H1 (cell line): ENCODE measurements at regions of chr3 and their contacts with region 1.

Region 1: GRCh38 chr3:185561374-185561943 is 9.1 kb upstream of the LIPH start:
- DNase-seq: no peak
- H3K4me3 ChIP-seq: no peak overlapping the region
- H3K27ac ChIP-seq: 0 out of 2 replicates have a peak overlapping the region, but pooled peaks have one; percentile 4
- H3K4me1 ChIP-seq: peaks cover 6 to 16% (median 9%) of the 10 kb centered on the region in 4 experiments
- H3K27me3 ChIP-seq: no peaks in the 10 kb centered on the region
- CTCF ChIP-seq: no peak
- EP300 ChIP-seq: no peak
- POLR2A ChIP-seq: no peak
- RAD21 ChIP-seq: no peak

Region 2: DNA sequence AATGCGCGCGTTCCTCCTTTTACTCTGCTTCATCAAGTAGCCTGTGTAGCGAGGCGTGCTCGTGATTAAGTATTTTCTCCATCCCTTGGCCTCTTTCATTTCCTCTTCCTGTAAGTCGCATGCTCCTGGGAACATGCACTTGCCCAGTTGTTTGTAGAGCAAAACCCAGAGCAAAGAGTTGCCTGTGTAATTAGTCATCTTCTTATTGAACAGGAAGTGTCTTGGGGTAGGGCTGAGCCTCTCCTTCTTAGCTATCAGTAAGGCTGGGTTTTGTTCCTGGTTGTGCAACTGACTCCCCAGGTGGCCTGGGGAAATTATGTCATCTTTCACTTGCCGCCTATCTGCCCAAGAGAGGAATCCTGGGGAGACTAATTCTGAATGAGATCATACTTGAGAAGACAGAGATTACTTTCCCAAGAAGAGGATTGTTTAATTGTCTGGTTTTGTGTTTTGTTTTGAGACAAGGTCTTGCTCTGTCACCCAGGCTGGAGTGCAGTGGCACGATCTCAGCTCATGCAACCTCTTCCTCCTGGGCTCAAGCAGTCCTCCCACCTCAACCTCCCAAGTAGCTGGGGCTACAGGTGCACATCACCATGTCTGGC is 24.0 kb before region 1 on chr3:
- CTCF ChIA-PET with region 1: interaction called, 32 read pairs
- POLR2A ChIA-PET with region 1: no interaction called
- DNase-seq: no peak
- H3K4me3 ChIP-seq: no peak overlapping the region
- H3K27ac ChIP-seq: no peak overlapping the region
- H3K4me1 ChIP-seq: no peaks in the 10 kb centered on the region
- H3K27me3 ChIP-seq: no peaks in the 10 kb centered on the region
- CTCF ChIP-seq: no peak
- EP300 ChIP-seq: no peak
- POLR2A ChIP-seq: no peak
- RAD21 ChIP-seq: no peak

Region 3: DNA sequence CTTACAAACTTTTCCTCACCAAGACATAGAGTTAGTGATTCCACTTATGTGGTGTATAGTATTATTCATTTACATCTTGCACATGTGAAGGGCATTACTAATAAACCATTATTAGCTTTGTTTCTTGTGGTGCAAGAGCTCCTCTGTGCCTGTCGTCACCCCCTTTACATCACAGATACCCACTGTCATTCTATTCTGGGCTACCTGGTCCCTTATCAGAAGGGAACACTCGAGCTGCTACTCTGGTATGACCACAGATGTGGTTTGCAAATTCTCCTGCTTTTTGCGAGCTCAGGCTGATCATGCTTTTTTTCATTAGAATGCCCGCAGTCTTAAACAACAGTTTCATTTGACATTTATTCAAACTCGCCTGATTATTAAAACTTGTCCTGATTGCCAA is 10.7 kb after region 1 on chr3:
- CTCF ChIA-PET with region 1: interaction called, 69 read pairs
- POLR2A ChIA-PET with region 1: interaction called, 6 read pairs
- DNase-seq: no peak
- H3K4me3 ChIP-seq: no peak overlapping the region
- H3K27ac ChIP-seq: no peak overlapping the region
- H3K4me1 ChIP-seq: peaks cover 0 to 3% (median under 1%) of the 10 kb centered on the region in 4 experiments; a peak in 1 of 7 replicates
- H3K27me3 ChIP-seq: no peaks in the 10 kb centered on the region
- CTCF ChIP-seq: no peak
- EP300 ChIP-seq: no peak
- POLR2A ChIP-seq: no peak
- RAD21 ChIP-seq: no peak

Region 4: DNA sequence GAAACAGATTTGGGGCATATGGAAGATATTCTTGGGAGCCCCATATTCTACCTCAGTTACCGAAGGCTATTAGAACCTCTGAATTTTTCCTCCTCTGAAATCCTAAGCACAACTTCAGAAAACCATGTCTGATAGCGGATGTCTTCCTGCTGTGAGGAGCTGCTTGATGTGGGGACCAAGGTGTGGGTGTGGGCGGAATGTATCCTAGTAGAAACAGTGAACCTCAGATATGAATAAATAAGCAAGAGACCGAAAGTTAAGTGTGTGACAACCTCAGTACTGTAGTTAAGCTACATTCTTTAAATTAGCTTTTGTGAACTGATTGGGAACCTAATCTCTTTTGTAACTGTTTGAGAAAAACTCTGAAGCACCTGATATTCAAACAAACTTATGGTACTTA is 71.5 kb after region 1 on chr3:
- CTCF ChIA-PET with region 1: no interaction called
- POLR2A ChIA-PET with region 1: no interaction called
- DNase-seq: no peak
- H3K4me3 ChIP-seq: no peak overlapping the region
- H3K27ac ChIP-seq: no peak overlapping the region
- H3K4me1 ChIP-seq: no peaks in the 10 kb centered on the region
- H3K27me3 ChIP-seq: no peaks in the 10 kb centered on the region; a peak in 1 of 7 replicates
- CTCF ChIP-seq: no peak
- EP300 ChIP-seq: no peak
- POLR2A ChIP-seq: no peak
- RAD21 ChIP-seq: no peak